BJ (cell line): ENCODE measurements at regions of chrX and their contacts with region 1.

Region 1: GRCh38 chrX:100946299-100946920 is 17.7 kb upstream of the XKRX start:
- DNase-seq: peak; percentile 9
- H3K4me3 ChIP-seq: no peak overlapping the region
- H3K27me3 ChIP-seq: no peaks in the 10 kb centered on the region
- CTCF ChIP-seq: no peak

Region 2: GRCh38 chrX:101062176-101062575 is 115.8 kb after region 1 on chrX:
- CTCF ChIA-PET with region 1: no interaction called
- POLR2A ChIA-PET with region 1: interaction called, 12 read pairs
- DNase-seq: no peak
- H3K4me3 ChIP-seq: no peak overlapping the region
- H3K27me3 ChIP-seq: no peaks in the 10 kb centered on the region
- CTCF ChIP-seq: no peak

Region 3: DNA sequence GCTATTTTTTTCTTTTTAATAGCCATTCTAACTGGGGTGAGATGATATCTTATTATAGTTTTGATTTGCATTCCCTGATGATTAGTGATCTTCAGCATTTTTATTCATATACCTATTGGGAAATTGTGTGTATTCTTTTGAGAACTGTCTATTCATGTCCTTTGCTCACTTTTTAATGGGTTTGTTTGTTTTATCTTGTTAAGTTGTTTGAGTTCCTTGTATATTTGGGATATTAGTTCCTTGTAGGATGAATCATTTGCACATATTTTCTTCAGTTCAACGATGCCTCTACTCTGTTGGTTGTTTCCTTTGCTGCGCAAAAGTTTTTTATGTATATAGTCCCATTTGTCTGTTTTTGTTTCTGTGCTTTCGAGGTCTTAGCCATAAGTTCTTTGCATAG is 230.0 kb after region 1 on chrX:
- CTCF ChIA-PET with region 1: no interaction called
- POLR2A ChIA-PET with region 1: no interaction called
- DNase-seq: no peak
- H3K4me3 ChIP-seq: no peak overlapping the region
- H3K27me3 ChIP-seq: no peaks in the 10 kb centered on the region
- CTCF ChIP-seq: no peak